ENCODE measurements at regions of chr3 and their contacts with region 1.

Region 1: DNA sequence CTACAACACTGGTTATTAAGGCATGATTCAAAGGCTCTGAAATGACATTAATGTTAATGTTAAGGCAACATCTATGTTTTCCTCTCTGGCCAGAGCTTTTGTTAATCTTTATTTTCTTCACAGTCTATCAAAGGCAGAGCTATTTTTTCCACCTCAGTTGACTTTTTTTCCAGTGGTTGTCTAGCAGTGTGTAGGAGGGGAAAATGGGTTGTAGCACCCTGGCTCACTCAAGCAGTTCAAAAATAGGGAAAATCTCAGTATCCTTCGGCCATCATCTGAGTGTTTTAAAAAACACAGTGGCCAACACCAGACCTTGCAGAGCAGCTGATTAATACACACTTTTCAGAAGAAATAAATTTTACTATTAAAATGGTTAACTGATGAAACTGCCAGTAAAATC is 21.4 kb downstream of the CBLB start:
- DNase-seq: no peak
- H3K4me3 Mint-ChIP-seq: peak overlapping the region; percentile 45
- H3K27ac Mint-ChIP-seq: peak overlapping the region; percentile 85
- H3K4me1 Mint-ChIP-seq: peaks cover 65% of the 10 kb centered on the region
- H3K27me3 Mint-ChIP-seq: no peaks in the 10 kb centered on the region

Region 2: DNA sequence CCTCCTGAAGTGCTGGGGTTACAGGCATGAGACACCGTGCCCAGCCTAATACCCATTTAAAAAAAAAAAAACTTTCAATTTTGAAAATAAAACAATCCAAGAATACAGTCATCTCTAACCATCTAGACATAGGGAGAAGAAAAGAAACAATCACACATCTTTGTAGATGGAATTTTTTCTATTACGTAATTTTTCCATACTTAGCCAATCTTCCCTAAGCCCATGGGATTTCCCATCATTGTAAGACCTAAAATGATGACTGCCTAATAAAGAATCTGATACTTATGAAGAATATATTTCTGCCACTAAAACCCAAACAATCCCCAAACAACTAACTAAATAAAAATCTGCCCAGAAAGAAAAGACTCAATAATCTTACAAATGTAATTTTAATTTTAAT is 67.3 kb before region 1 on chr3:
- intact Hi-C with region 1: no loop called
- DNase-seq: no peak
- H3K4me3 Mint-ChIP-seq: no peak overlapping the region
- H3K27ac Mint-ChIP-seq: no peak overlapping the region
- H3K4me1 Mint-ChIP-seq: peaks cover 61% of the 10 kb centered on the region
- H3K27me3 Mint-ChIP-seq: no peaks in the 10 kb centered on the region

Region 3: DNA sequence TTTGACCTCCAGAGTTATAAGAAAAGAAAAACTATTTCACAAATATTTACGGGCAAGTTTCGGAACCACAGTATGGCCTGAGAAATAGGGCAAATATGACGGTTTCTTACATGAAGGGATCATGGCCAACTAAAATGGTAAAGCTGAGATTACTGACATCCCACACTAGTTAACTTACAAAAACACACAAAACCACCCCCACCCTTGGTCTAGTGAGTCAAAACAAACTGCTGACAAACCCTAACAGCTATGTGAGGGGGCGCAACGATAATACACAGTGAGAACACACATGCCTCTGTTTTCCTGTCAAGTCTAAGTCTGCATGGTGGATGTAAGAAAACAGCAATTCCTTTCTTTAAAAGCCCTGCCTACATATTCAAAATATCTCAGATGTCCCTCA is 10.9 kb before region 1 on chr3:
- intact Hi-C with region 1: loop called (anchors 1 kb)
- DNase-seq: peak; percentile 27
- H3K4me3 Mint-ChIP-seq: peak overlapping the region; percentile 71
- H3K27ac Mint-ChIP-seq: peak overlapping the region; percentile 93
- H3K4me1 Mint-ChIP-seq: peaks cover 85% of the 10 kb centered on the region
- H3K27me3 Mint-ChIP-seq: no peaks in the 10 kb centered on the region

Region 4: DNA sequence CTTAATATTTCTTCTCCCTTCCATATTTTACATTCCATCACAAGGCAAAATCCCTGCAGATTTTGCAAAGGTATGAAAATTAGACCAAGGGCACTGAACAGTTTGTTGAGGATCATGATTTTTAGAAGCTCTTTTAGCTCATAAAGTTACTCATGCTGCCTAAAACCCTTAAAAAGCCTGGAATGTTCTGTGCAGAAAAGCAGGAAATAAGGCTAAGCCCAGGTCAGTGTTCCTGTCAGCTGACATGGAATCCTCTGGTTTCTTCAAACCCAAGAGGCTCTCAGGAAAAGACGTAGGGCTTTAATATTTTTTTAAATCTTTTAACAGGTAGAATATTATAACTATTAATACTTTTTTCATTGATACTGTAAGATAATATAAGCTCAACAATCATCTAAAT is 13.2 kb after region 1 on chr3:
- intact Hi-C with region 1: loop called (anchors 1 kb)
- DNase-seq: no peak
- H3K4me3 Mint-ChIP-seq: no peak overlapping the region
- H3K27ac Mint-ChIP-seq: no peak overlapping the region
- H3K4me1 Mint-ChIP-seq: peaks cover 28% of the 10 kb centered on the region
- H3K27me3 Mint-ChIP-seq: no peaks in the 10 kb centered on the region

Region 5: GRCh38 chr3:106071306-106071705 is 223.9 kb after region 1 on chr3:
- intact Hi-C with region 1: no loop called
- DNase-seq: no peak
- H3K4me3 Mint-ChIP-seq: no peak overlapping the region
- H3K27ac Mint-ChIP-seq: no peak overlapping the region
- H3K4me1 Mint-ChIP-seq: peaks cover 15% of the 10 kb centered on the region
- H3K27me3 Mint-ChIP-seq: no peaks in the 10 kb centered on the region

Measured in activated T-helper 1 cell treated with anti-CD3 and anti-CD28 coated beads, Interleukin-12 subunit alpha, Interleukin-12 subunit beta, Interleukin-2, Interleukin-4 antibody, amounts not matched to agents 30 ng/mL and 10 ng/mL and 1 ng/mL, durations not matched to agents 14 hours and 24 hours and 36 hours (primary cell).